Caco-2 (cell line): ENCODE measurements at regions of chr5 and their contacts with region 1.

Region 1: DNA sequence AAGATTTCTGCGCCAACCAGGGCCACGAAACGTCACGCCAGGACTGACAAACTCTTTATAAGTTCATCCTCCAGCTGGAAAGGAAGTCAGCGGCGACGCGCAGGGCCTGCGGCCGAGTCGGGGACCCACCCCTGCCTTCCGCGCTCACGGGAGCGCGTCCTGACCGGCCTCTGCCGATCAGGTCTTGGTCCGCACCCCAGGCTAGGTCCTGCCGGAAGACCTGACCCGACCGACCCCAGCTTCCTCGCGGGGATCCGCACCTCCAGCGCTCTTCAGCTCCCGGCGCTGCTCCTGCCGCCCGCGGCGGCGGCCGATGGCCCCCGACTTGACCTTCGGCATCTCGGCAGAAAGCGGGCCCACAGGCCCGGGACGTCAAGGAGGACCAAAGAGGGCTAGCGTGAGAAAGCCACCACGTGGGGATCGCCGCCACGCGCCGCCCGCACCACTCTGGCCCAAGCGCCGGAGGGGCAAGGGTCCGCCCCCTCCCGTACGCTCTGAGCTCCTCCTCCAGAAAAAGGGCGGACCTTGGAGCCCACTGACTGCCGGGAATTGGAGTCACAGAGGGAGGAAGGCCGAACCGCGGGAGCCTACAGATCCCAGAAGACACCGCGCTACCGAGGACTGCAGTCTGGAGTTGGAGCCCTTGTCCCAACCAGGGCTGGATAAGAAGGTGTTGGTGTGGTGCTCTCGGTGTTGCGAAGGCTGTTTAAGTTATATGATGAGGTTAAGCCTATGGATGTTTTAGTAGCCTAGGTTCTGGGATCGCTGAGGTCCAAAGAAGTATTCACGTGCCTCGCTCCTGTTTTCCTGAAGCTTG is at the start of gene DIMT1:
- DNase-seq: peak; percentile 97
- H3K4me3 ChIP-seq: peak within 1 kb of the TSS; percentile 81
- H3K4me3 Mint-ChIP-seq: peak within 1 kb of the TSS; percentile 99
- H3K27ac Mint-ChIP-seq: peak within 1 kb of the TSS; percentile 100
- H3K4me1 ChIP-seq: peaks cover 6% of the 10 kb centered on the region; the same call in 1 of the 2 replicates
- H3K4me1 Mint-ChIP-seq: peaks cover 15% of the 10 kb centered on the region
- H3K27me3 ChIP-seq: no peaks in the 10 kb centered on the region
- H3K27me3 Mint-ChIP-seq: no peaks in the 10 kb centered on the region
- CTCF ChIP-seq: no peak
- total RNA-seq, gene DIMT1: 31.8 and 33.4 TPM in 2 replicates

Region 2: GRCh38 chr5:62386824-62387223 is 16.8 kb before region 1 on chr5:
- CTCF ChIA-PET with region 1: interaction called, 4 read pairs
- POLR2A ChIA-PET with region 1: interaction called, 12 read pairs
- intact Hi-C with region 1: no loop called
- DNase-seq: no peak
- H3K4me3 ChIP-seq: no peak overlapping the region
- H3K4me3 Mint-ChIP-seq: no peak overlapping the region
- H3K27ac Mint-ChIP-seq: no peak overlapping the region
- H3K4me1 ChIP-seq: 0 out of 2 replicates have a peak, but pooled peaks cover 7% of the 10 kb centered on the region
- H3K4me1 Mint-ChIP-seq: no peaks in the 10 kb centered on the region
- H3K27me3 ChIP-seq: no peaks in the 10 kb centered on the region
- H3K27me3 Mint-ChIP-seq: no peaks in the 10 kb centered on the region
- CTCF ChIP-seq: no peak

Region 3: DNA sequence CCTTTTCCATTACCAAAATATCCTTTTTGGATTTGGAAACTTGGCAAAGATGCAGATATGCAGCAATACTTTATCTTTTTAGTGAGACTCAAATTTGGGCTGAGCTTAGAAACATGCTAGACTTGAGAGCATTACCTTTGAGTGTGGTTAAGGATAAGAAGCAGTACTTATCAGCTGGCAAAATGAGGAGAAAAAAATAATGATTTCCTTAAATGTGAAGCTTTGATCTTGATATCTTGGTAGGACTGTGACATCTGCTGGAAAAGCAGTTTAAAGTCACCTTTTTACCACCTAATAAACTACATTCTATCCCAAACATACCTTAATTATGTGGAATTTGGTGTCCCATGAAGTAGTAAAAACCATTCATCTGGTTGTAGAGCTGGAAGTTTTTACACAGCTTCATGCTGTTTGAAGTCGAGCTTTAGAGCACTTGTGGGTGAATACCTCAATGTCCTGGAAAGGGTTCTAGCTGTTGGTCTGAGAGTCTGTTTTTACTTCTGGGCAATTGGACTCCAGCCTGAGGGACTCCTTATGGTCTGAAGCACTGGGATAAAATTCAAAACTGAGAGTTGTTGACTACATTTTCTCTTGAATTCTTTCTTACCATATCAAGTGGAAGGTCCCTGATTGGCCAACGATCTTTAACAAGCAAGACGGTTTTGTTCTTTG is 228.4 kb after region 1 on chr5:
- CTCF ChIA-PET with region 1: no interaction called
- POLR2A ChIA-PET with region 1: no interaction called
- intact Hi-C with region 1: no loop called
- DNase-seq: no peak
- H3K4me3 ChIP-seq: no peak overlapping the region
- H3K4me3 Mint-ChIP-seq: no peak overlapping the region
- H3K27ac Mint-ChIP-seq: no peak overlapping the region
- H3K4me1 ChIP-seq: no peaks in the 10 kb centered on the region
- H3K4me1 Mint-ChIP-seq: no peaks in the 10 kb centered on the region
- H3K27me3 ChIP-seq: no peaks in the 10 kb centered on the region
- H3K27me3 Mint-ChIP-seq: no peaks in the 10 kb centered on the region
- CTCF ChIP-seq: no peak